HEK293 (cell line): ENCODE measurements at regions of chr5 and their contacts with region 1.

Region 1: GRCh38 chr5:127031147-127031853 is 942 bp upstream of the MARCHF3 start:
- H3K4me3 ChIP-seq: peak overlapping the region; percentile 70
- H3K27ac ChIP-seq: peak overlapping the region; percentile 83
- H3K4me1 ChIP-seq: peaks cover 19% of the 10 kb centered on the region
- CTCF ChIP-seq: no peak

Region 2: GRCh38 chr5:127011961-127012644 is 19.2 kb before region 1 on chr5:
- CTCF ChIA-PET with region 1: no interaction called
- POLR2A ChIA-PET with region 1: no interaction called
- H3K4me3 ChIP-seq: no peak overlapping the region
- H3K27ac ChIP-seq: no peak overlapping the region
- H3K4me1 ChIP-seq: 0 out of 2 replicates have a peak, but pooled peaks cover 2% of the 10 kb centered on the region
- CTCF ChIP-seq: no peak

Region 3: DNA sequence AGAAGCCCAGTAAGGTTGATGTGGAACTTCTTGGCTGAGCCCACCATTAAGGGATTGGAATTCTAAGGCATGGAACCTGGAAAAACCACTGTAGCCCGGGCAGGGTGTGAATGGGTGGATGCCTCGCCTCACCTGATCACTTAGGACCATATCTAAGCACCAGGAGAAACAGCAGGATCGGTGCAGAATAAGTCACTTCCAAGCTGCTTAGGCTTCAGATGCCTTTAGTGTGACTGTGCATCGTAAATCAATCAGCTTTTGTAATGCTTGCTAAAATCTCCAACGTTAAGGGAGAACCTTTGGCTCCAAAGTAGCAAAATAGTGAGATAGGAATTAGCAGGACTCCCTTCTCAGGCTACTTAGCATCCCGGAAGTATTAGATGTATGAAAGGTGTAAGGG is 155.4 kb after region 1 on chr5:
- CTCF ChIA-PET with region 1: no interaction called
- POLR2A ChIA-PET with region 1: no interaction called
- H3K4me3 ChIP-seq: no peak overlapping the region
- H3K27ac ChIP-seq: no peak overlapping the region
- H3K4me1 ChIP-seq: no peaks in the 10 kb centered on the region
- CTCF ChIP-seq: no peak

Region 4: DNA sequence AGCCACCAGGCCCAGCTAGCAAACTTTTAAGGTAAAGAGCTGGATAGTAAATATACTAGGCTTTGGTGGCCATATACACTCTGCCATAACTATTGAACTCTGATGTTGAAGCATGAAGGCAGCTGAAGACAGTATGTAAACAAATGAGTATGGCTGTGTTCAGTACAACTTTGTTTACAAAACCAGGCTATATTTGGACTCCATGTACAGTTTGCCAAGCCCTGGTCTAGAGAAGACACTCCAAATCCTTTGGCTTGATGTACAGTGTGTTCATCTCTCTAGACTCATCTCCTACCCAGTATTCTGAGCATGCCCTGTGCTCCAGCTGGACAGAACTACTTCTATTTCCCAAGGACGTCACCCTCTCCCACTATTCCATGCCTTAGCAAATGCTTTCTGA is 205.0 kb after region 1 on chr5:
- CTCF ChIA-PET with region 1: no interaction called
- POLR2A ChIA-PET with region 1: interaction called, 10 read pairs
- H3K4me3 ChIP-seq: no peak overlapping the region
- H3K27ac ChIP-seq: no peak overlapping the region
- H3K4me1 ChIP-seq: no peaks in the 10 kb centered on the region
- CTCF ChIP-seq: no peak